ENCODE measurements at regions of chr10 and their contacts with region 1.

Region 1: GRCh38 chr10:18214691-18215563 is 74.7 kb downstream of the CACNB2 start:
- DNase-seq: peak; percentile 85
- H3K4me3 ChIP-seq: no peak overlapping the region
- H3K27ac ChIP-seq: peak overlapping the region; percentile 63
- H3K4me1 ChIP-seq: peaks cover 45% of the 10 kb centered on the region
- H3K27me3 ChIP-seq: no peaks in the 10 kb centered on the region
- CTCF ChIP-seq: peak; percentile 91

Region 2: GRCh38 chr10:17742918-17743317 is 472.0 kb before region 1 on chr10:
- CTCF ChIA-PET with region 1: interaction called, 3 read pairs
- POLR2A ChIA-PET with region 1: no interaction called
- intact Hi-C with region 1: loop called (anchors 5 kb)
- DNase-seq: peak; percentile 79
- H3K4me3 ChIP-seq: no peak overlapping the region
- H3K27ac ChIP-seq: no peak overlapping the region
- H3K4me1 ChIP-seq: peaks cover 4% of the 10 kb centered on the region
- H3K27me3 ChIP-seq: no peaks in the 10 kb centered on the region
- CTCF ChIP-seq: peak; percentile 81

Region 3: DNA sequence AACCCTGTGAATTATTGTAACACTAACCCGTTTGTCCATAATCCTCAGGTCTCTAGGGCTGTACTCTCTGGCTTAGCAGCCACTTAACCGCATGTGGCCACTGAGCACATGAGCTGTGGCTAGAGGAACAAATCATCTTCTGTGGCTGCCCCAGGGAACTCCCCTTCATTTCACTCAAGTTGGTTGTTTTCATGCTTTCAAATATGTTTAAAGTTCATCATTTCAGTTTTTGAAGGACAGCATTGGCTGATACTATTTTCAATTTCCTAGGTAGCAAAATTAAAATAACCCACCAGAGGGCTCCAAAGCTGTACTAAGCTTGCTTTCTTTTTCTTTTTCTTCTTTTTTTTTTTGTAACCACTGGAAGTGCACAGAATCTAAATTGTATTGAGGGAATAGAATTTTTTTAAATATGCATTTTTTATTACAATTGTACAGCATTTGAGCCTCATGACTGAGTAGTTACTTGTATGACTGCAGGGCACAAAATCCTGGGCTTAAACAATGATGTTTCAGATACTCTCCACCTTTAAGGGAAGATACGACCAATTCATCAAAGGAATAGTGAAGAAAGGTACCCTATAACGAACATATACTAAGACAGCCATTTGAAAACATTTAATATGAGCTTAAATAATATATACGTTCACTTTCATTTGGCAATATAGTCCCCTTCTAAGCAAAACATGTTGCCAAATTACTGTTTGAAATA is 367.2 kb before region 1 on chr10:
- CTCF ChIA-PET with region 1: interaction called, 11 read pairs
- POLR2A ChIA-PET with region 1: no interaction called
- intact Hi-C with region 1: loop called (anchors 2 kb)
- DNase-seq: peak; percentile 59
- H3K4me3 ChIP-seq: no peak overlapping the region
- H3K27ac ChIP-seq: no peak overlapping the region
- H3K4me1 ChIP-seq: peaks cover 45% of the 10 kb centered on the region
- H3K27me3 ChIP-seq: no peaks in the 10 kb centered on the region
- CTCF ChIP-seq: peak; percentile 75

Region 4: DNA sequence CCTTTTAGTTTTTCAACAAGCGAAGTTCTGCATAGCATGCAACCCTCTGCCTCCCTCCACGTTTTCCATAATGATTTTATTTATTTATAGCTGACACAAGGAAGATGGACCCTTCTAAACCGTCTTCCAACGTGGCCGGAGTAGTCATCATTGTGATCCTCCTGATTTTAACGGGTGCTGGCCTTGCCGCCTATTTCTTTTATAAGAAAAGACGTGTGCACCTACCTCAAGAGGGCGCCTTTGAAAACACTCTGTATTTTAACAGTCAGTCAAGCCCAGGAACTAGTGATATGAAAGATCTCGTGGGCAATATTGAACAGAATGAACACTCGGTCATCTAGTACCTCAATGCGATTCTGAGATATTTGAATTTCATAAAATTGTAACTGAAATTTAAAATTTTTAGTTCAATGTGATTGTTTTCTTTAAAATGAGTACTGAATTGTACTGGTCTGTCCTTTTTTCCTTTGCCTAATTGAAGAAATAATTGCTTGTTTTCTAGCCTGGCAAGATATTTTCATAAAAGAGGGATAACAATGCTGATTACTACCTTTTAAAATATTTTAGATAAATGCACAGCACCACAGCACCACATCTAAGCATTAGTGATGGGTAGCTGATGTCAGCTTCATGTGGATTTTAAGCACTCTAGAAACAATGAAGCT is 304.7 kb before region 1 on chr10:
- CTCF ChIA-PET with region 1: no interaction called
- POLR2A ChIA-PET with region 1: no interaction called
- intact Hi-C with region 1: loop called (anchors 2 kb)
- DNase-seq: peak; percentile 86
- H3K4me3 ChIP-seq: no peak overlapping the region
- H3K27ac ChIP-seq: no peak overlapping the region
- H3K4me1 ChIP-seq: peaks cover 3% of the 10 kb centered on the region
- H3K27me3 ChIP-seq: no peaks in the 10 kb centered on the region
- CTCF ChIP-seq: peak; percentile 87

Region 5: GRCh38 chr10:18140149-18140956 is 74.6 kb before region 1 on chr10 and contains the start of gene CACNB2:
- CTCF ChIA-PET with region 1: no interaction called
- POLR2A ChIA-PET with region 1: no interaction called
- intact Hi-C with region 1: loop called (anchors 5 kb)
- DNase-seq: peak; percentile 85
- H3K4me3 ChIP-seq: peak within 1 kb of the TSS; percentile 83
- H3K27ac ChIP-seq: peak within 1 kb of the TSS; percentile 88
- H3K4me1 ChIP-seq: peaks cover 36% of the 10 kb centered on the region
- H3K27me3 ChIP-seq: no peaks in the 10 kb centered on the region
- CTCF ChIP-seq: 0 out of 2 replicates have a peak, but pooled peaks have one; percentile 11
- total RNA-seq, gene CACNB2: 30.0 and 34.1 TPM in 2 replicates

Region 6: DNA sequence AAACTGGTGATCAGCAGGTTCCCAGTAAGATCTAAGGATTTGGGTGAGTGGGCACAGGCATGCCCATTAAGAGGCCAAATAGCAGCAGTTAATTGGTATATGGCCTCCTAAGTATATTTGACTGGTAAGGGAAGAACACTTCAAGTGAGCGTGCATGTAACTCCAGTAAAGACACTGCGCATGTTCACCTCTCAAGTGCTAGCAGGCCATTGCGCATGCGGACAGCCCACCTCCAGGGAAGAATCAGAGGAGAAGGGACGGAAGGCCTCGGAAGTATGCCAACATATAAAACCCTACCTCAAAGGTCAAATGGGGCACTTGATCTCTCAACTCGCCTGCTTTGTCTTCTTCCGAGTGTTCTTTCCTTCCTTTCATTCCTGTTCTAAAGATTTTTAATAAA is 562.3 kb after region 1 on chr10:
- CTCF ChIA-PET with region 1: no interaction called
- POLR2A ChIA-PET with region 1: no interaction called
- intact Hi-C with region 1: no loop called
- DNase-seq: no peak
- H3K4me3 ChIP-seq: no peak overlapping the region
- H3K27ac ChIP-seq: no peak overlapping the region
- H3K4me1 ChIP-seq: no peaks in the 10 kb centered on the region
- H3K27me3 ChIP-seq: no peaks in the 10 kb centered on the region
- CTCF ChIP-seq: no peak

Region 7: GRCh38 chr10:19290770-19291169 is 1075.8 kb after region 1 on chr10:
- CTCF ChIA-PET with region 1: no interaction called
- POLR2A ChIA-PET with region 1: no interaction called
- intact Hi-C with region 1: no loop called
- DNase-seq: no peak
- H3K4me3 ChIP-seq: no peak overlapping the region
- H3K27ac ChIP-seq: no peak overlapping the region
- H3K4me1 ChIP-seq: no peaks in the 10 kb centered on the region
- H3K27me3 ChIP-seq: no peaks in the 10 kb centered on the region
- CTCF ChIP-seq: no peak